ENCODE measurements at regions of chr16 and their contacts with region 1.

Region 1: DNA sequence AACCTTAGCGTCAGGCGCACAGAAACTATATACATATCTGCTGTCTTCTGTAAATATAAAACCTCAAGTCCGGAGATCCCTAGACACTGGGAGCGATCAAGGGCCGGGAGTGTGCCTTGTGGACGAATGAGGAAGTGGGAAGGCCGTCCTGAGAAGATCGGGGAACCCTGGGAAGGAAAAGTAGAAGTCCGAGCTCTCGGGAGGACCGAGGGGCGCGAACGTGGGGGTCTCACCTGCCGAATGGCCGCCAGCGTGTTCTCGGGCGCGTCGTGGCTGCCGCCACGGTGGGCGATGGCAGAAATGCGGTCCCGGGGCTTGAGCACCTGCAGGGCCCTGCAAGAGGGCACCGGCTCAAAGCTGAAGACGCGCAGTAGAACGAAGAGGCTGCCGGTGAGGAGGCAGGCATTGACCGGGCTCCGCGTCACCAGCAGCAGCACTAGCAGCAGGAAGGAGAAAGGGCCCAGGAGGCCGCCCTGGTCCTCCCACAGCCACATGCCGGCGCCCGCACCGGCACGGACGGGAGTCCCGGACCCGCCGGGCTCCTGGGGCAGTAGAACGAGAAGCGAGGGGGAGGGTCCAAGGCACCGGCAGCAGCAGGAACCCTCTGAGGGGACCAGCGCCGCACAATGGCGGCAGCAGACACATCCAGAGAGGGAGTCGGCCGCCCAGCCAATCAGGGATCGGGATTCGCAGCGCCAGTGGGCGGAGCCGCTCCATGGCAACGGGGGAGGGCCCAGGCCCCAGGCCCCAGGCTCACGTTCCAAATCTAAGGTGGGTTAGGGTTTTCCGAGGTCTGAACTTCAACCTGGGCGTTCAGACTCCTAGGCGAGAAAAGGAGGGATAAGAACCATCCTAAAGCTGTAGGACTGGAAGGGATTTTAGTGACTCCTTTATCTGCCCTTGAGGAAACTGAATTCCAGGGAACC is at the start of gene GDE1:
- DNase-seq: peak; percentile 97
- H3K4me3 ChIP-seq: peak within 1 kb of the TSS; percentile 71 to 82
- H3K27ac ChIP-seq: peak within 1 kb of the TSS; percentile 86 to 90
- H3K4me1 ChIP-seq: peaks cover 9% of the 10 kb centered on the region
- H3K27me3 ChIP-seq: no peaks in the 10 kb centered on the region
- CTCF ChIP-seq: peak in 3 of 4 experiments; percentile 2 to 47 (median 3)
- POLR2A ChIP-seq: peak; percentile 95
- total RNA-seq, gene GDE1: 67.8 to 92.1 TPM

Region 2: DNA sequence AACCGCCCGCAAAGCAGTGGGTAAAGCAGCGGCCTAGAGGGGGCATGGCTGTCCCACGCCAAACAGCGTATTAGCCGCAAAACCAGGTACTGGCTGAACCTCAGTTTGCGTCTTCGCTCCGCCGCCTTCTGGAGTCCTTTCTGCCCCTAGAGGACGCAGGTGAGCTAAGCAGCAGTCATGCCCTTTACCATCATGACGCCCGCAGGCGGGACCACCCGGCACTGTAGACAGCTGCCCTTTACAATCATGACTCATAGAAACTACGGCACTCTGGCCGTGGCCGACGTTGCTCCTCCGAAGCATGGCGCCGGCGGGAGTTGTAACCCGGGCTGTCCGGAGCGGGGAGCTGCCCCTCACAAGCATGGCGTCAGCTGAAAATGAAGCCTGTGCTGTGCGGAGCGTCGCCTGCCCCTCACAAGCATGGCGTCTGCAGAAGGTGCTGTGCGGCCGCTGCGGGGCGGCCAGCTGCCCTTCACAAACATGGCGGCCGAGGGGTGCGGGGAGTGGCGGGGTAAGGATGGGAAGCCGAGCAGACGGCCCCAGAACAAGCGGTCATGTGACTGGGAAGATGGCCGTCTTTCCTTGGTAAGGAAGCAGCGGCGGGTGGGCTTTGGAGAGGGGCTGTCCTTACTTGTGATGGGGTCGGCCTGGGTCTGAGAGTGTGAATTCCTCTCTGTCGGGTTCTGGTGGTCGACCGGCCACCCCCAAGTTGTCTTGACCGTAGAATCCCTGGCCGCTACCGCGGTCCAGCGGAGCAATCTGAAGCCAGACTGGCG is 33.6 kb after region 1 on chr16 and contains the start of gene VPS35L:
- intact Hi-C with region 1: loop called (anchors 2 kb)
- DNase-seq: peak; percentile 90
- H3K4me3 ChIP-seq: peak within 1 kb of the TSS; percentile 48 to 60
- H3K27ac ChIP-seq: peak within 1 kb of the TSS; percentile 85
- H3K4me1 ChIP-seq: no peaks in the 10 kb centered on the region
- H3K27me3 ChIP-seq: no peaks in the 10 kb centered on the region
- CTCF ChIP-seq: peak; percentile 63 to 85 (median 74)
- POLR2A ChIP-seq: peak; percentile 50
- total RNA-seq, gene VPS35L: 58.8 to 74.0 TPM